Sigmoid colon (tissue), 7 donors: ENCODE measurements at regions of chr5 and their contacts with region 1.

Region 1: DNA sequence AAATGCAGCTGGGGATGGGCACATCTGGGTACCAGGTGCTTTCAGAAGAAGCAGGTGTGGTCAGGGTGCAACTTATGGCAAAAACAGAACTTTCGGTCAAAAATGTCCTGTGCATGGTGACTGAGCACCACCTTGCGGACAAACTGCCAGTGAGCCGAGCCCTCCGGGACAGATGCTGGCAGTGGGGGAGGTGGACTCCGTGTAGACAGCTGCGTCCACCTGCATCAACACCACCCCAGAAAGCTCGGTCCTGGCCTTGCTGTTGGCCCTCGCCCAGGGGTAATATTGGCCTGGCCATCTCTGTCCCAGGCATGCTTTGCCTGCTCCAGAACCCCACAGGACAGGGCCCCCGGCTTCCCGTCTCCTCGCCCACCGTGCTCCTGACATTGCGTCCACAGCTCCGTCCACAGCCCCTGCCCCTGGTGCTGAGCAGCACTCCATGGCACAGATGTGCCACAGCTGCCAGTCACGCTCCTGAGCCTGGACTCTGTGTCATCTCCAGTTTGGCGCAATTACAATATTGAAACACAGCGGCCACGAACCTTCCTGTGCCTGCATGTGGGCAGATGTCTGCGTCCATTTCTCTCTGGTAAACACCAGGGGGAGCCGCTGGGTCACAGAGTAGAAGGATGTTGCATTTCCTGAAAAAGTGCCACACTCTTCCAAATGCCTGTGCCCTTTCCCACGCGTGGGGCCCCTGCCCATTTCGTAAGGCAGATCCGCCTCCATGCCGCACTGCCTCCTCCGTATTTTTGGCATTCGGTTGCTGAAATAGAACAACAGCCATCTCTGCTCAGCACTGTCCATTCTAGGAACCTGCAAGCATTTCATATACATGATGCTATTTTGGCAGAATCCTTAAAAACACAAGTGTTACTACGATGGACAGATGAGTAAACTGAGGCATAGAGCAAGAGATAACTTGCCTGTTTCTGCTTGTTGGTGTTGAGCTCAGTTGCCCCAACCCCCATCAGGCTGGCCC is 33.4 kb upstream of the SLC6A19 start:
- DNase-seq: peak; percentile 80
- H3K4me3 ChIP-seq: peak overlapping the region in 1 of 4 donors; percentile 20
- H3K27ac ChIP-seq: no peak overlapping the region
- H3K4me1 ChIP-seq: peaks cover 0 to 11% (median 2%) of the 10 kb centered on the region in 4 donors
- H3K27me3 ChIP-seq: peaks cover 0 to 15% (median 0%) of the 10 kb centered on the region in 3 donors
- CTCF ChIP-seq: peak in 3 of 4 experiments; percentile 51 to 75 (median 63)
- EP300 ChIP-seq: no peak
- POLR2A ChIP-seq: no peak

Region 2: GRCh38 chr5:923281-923873 is 244.6 kb before region 1 on chr5:
- intact Hi-C with region 1: loop called (anchors 2 kb)
- DNase-seq: peak; percentile 89
- H3K4me3 ChIP-seq: no peak overlapping the region
- H3K27ac ChIP-seq: no peak overlapping the region
- H3K4me1 ChIP-seq: peaks cover 0 to 14% (median 13%) of the 10 kb centered on the region in 4 donors
- H3K27me3 ChIP-seq: peaks cover 0 to 15% (median 11%) of the 10 kb centered on the region in 3 donors
- CTCF ChIP-seq: peak; percentile 68 to 93 (median 80)
- EP300 ChIP-seq: no peak
- POLR2A ChIP-seq: no peak

Region 3: GRCh38 chr5:1479581-1480188 is 311.7 kb after region 1 on chr5:
- intact Hi-C with region 1: loop called (anchors 10 kb)
- DNase-seq: no peak
- H3K4me3 ChIP-seq: no peak overlapping the region
- H3K27ac ChIP-seq: peak overlapping the region in 2 of 4 donors; percentile 14 to 59
- H3K4me1 ChIP-seq: peaks cover 0 to 11% (median 3%) of the 10 kb centered on the region in 4 donors
- H3K27me3 ChIP-seq: no peaks in the 10 kb centered on the region
- CTCF ChIP-seq: peak in 3 of 4 experiments; percentile 43 to 66 (median 44)
- EP300 ChIP-seq: peak in 1 of 4 donors; percentile 65
- POLR2A ChIP-seq: no peak

Region 4: GRCh38 chr5:2129568-2130272 is 961.7 kb after region 1 on chr5:
- intact Hi-C with region 1: no loop called
- DNase-seq: no peak
- H3K4me3 ChIP-seq: peak overlapping the region in 1 of 4 donors; percentile 2
- H3K27ac ChIP-seq: no peak overlapping the region
- H3K4me1 ChIP-seq: peaks cover 0 to 9% (median 2%) of the 10 kb centered on the region in 4 donors
- H3K27me3 ChIP-seq: peaks cover 0 to 21% (median 0%) of the 10 kb centered on the region in 3 donors
- CTCF ChIP-seq: no peak
- EP300 ChIP-seq: no peak
- POLR2A ChIP-seq: no peak